ENCODE measurements at regions of chr5 and their contacts with region 1.

Region 1: DNA sequence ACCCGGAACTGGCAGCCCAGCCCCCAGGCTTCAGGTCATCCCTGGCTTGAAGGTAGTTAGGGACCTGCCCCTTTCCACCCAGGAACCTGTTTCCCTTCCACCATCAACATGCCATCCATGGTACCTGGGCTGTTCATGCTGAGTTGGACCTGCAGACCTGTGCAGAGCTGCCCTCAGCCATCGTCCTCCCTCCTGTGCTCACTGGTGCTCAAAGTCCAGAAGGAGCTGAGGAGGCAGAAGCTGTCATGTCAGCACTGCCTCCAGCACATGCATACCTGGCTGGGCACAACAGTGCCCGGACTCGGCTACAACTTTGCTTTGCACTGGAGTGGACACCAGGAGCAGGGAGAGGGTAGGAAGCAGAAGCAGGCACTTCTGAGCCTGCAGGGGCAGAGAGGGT is 36.2 kb downstream of the BTNL8 start:
- DNase-seq: no peak
- ATAC-seq: no peak
- H3K4me3 ChIP-seq: no peak overlapping the region
- H3K27ac ChIP-seq: no peak overlapping the region
- H3K4me1 ChIP-seq: no peaks in the 10 kb centered on the region
- H3K27me3 ChIP-seq: no peaks in the 10 kb centered on the region
- CTCF ChIP-seq: no peak
- POLR2A ChIP-seq: no peak

Region 2: GRCh38 chr5:181005791-181006190 is 70.6 kb after region 1 on chr5:
- intact Hi-C with region 1: loop called (anchors 5 kb)
- DNase-seq: no peak
- ATAC-seq: no peak
- H3K4me3 ChIP-seq: no peak overlapping the region
- H3K27ac ChIP-seq: no peak overlapping the region
- H3K4me1 ChIP-seq: peaks cover 9% of the 10 kb centered on the region
- H3K27me3 ChIP-seq: no peaks in the 10 kb centered on the region
- CTCF ChIP-seq: no peak
- POLR2A ChIP-seq: no peak

Region 3: GRCh38 chr5:181114844-181115778 is 179.9 kb after region 1 on chr5:
- intact Hi-C with region 1: no loop called
- DNase-seq: peak in 1 of 4 donors; percentile 21
- ATAC-seq: peak; percentile 40
- H3K4me3 ChIP-seq: no peak overlapping the region
- H3K27ac ChIP-seq: no peak overlapping the region
- H3K4me1 ChIP-seq: no peaks in the 10 kb centered on the region
- H3K27me3 ChIP-seq: peaks cover 0 to 14% of the 10 kb centered on the region in 2 donors
- CTCF ChIP-seq: no peak
- POLR2A ChIP-seq: no peak